Left lung (tissue), 14 donors: ENCODE measurements at regions of chr12 and their contacts with region 1.

Region 1: DNA sequence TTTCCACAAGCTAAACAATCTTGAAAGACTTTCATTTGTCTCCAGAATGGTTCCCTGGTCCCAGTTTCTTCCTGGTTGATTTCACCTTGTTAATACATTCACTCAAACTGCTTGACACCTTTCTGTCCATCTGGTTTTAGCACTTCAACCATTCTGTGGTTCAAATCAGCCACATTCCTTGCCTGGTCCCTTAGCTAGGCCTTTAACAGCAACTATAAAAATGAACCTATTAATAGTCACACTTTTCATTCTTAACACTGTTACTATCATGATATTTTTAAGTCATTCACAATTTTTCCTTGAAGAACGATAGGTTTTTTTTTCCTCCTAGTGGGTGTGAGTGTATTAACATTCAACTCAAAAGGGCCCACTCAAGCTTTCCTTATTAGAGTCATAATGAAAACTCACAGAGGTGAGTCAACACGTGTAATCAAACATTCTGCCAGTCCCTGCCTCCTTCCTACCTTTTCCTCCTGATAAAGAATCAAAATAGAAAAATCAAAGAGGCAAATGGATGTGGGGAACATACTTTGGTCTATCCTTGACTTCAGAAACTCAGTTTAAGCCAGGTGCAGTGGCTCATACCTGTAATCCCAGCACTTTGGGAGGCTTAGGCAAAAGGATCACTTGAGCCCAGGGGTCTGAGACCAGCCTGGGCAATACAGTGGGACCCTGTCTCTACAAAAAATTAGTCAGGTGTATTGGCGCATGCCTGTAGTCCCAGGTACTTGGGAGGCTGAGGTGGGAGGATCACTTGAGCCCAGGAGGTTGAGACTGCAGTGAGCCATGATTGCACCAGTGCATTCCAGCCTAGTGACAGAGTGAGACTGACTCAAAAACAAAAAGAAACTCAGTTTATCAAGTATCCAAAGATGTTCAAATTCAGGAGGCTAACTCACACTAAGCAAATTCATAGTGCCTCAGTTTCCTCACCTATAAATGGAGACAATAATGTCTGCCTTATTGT is 34.5 kb upstream of the CCNT1 start:
- DNase-seq: no peak
- ATAC-seq: peak; percentile 79
- H3K4me3 ChIP-seq: no peak overlapping the region
- H3K27ac ChIP-seq: peak overlapping the region in 1 of 2 donors; percentile 27
- H3K4me1 ChIP-seq: no peaks in the 10 kb centered on the region
- H3K27me3 ChIP-seq: no peaks in the 10 kb centered on the region
- CTCF ChIP-seq: no peak

Region 2: DNA sequence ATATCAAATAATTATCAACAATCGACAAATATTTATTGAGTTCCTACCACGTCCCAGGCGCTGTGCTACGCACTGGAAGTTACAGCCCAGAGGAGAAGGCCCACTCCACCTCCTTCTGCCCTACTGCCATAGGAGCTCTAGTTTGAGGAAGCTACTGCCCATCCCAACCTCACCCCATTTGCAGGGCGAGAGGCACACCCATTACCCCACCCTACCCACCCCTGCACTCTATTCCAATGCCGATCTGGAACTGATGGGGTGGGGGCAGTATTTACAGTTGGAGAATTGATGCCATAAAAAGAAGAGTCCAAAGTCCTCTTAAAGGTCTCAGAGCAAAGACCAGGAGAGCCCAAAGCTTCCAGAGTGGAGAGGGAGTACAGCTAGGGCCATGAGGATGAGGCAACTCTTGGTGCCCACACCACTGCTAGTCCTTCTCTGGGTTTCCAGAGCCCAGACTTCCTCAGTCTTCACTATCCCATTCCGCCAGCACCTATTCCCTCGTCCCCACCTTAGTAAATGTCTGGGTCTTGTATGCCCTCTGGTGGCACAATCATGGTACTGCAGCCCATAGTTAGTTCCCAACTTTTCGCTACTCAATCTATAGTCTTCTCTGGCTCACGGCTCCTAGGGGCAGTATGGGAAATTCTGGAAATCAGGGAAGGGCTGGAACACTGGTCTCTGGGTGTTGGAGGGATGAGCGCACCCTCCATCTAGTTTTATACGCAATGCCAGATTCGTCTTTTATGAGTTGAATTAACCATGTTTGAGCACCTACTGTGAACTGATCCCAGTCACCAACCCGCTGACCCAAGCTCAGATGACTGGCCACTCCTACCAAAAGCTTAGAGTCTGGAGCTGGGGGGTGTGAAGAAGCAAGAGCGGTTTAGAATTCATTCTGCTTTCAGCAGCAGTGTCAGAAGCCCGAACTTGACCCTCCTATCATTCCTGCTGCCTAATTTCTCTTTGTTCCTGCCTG is 44.7 kb after region 1 on chr12:
- intact Hi-C with region 1: loop called in 1 of 2 experiments (anchors 5 kb)
- DNase-seq: peak in 2 of 4 donors; percentile 48 to 78
- ATAC-seq: peak; percentile 98
- H3K4me3 ChIP-seq: no peak overlapping the region
- H3K27ac ChIP-seq: no peak overlapping the region
- H3K4me1 ChIP-seq: peaks cover 0 to 13% of the 10 kb centered on the region in 2 donors
- H3K27me3 ChIP-seq: peaks cover 0 to 13% of the 10 kb centered on the region in 2 donors
- CTCF ChIP-seq: peak; percentile 81 to 94